Activated B cell treated with CpG ODN at 0.5 μM for 24 hours (primary cell): ENCODE measurements at regions of chr9 and their contacts with region 1.

Region 1: GRCh38 chr9:68844631-68845612 is 139.9 kb downstream of the PIP5K1B start:
- DNase-seq: no peak
- ATAC-seq: peak; percentile 57
- H3K4me3 Mint-ChIP-seq: no peak overlapping the region
- H3K27ac Mint-ChIP-seq: no peak overlapping the region
- H3K4me1 Mint-ChIP-seq: peaks cover 21% of the 10 kb centered on the region
- H3K27me3 Mint-ChIP-seq: no peaks in the 10 kb centered on the region
- CTCF ChIP-seq: peak; percentile 50

Region 2: DNA sequence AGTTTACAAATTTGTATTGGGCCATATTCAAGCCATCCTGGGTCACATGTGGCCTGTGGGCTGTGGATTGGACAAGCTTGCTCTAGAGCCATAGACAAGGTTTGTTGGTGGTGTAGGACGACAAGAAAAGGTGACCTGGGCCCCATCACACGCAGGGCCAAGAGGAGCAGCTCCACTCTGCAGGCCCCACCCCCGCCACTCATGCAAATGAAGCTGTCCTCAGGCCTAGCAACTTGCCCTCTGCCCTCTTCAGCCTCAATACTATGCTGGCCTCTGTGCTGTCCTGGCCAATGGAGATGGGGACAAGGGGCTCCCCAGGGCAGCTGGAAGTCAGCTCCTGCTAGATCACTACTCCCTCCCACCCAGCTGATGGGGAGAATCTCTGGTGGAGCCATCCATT is 249.1 kb before region 1 on chr9:
- CTCF ChIA-PET with region 1: no interaction called
- POLR2A ChIA-PET with region 1: no interaction called
- intact Hi-C with region 1: no loop called
- DNase-seq: no peak
- ATAC-seq: no peak
- H3K4me3 Mint-ChIP-seq: no peak overlapping the region
- H3K27ac Mint-ChIP-seq: no peak overlapping the region
- H3K4me1 Mint-ChIP-seq: peaks cover 60% of the 10 kb centered on the region
- H3K27me3 Mint-ChIP-seq: no peaks in the 10 kb centered on the region
- CTCF ChIP-seq: no peak

Region 3: GRCh38 chr9:68685770-68686169 is 159.2 kb before region 1 on chr9:
- CTCF ChIA-PET with region 1: interaction called, 4 read pairs
- POLR2A ChIA-PET with region 1: no interaction called
- intact Hi-C with region 1: loop called (anchors 1 kb)
- DNase-seq: peak; percentile 27
- ATAC-seq: peak; percentile 97
- H3K4me3 Mint-ChIP-seq: no peak overlapping the region
- H3K27ac Mint-ChIP-seq: no peak overlapping the region
- H3K4me1 Mint-ChIP-seq: peaks cover 9% of the 10 kb centered on the region
- H3K27me3 Mint-ChIP-seq: no peaks in the 10 kb centered on the region
- CTCF ChIP-seq: no peak

Region 4: GRCh38 chr9:68779558-68780384 is 65.2 kb before region 1 on chr9:
- CTCF ChIA-PET with region 1: interaction called, 6 read pairs
- POLR2A ChIA-PET with region 1: interaction called, 3 read pairs
- intact Hi-C with region 1: loop called (anchors 1 kb)
- DNase-seq: peak; percentile 93
- ATAC-seq: peak; percentile 93
- H3K4me3 Mint-ChIP-seq: no peak overlapping the region
- H3K27ac Mint-ChIP-seq: no peak overlapping the region
- H3K4me1 Mint-ChIP-seq: peaks cover 6% of the 10 kb centered on the region
- H3K27me3 Mint-ChIP-seq: no peaks in the 10 kb centered on the region
- CTCF ChIP-seq: no peak

Region 5: GRCh38 chr9:68822596-68823165 is 22.2 kb before region 1 on chr9:
- CTCF ChIA-PET with region 1: no interaction called
- POLR2A ChIA-PET with region 1: no interaction called
- intact Hi-C with region 1: no loop called
- DNase-seq: no peak
- ATAC-seq: no peak
- H3K4me3 Mint-ChIP-seq: no peak overlapping the region
- H3K27ac Mint-ChIP-seq: no peak overlapping the region
- H3K4me1 Mint-ChIP-seq: no peaks in the 10 kb centered on the region
- H3K27me3 Mint-ChIP-seq: no peaks in the 10 kb centered on the region
- CTCF ChIP-seq: no peak

Region 6: GRCh38 chr9:68999393-69000105 is 154.6 kb after region 1 on chr9:
- CTCF ChIA-PET with region 1: interaction called, 12 read pairs
- POLR2A ChIA-PET with region 1: no interaction called
- intact Hi-C with region 1: loop called (anchors 1 kb)
- DNase-seq: peak; percentile 24
- ATAC-seq: peak; percentile 95
- H3K4me3 Mint-ChIP-seq: no peak overlapping the region
- H3K27ac Mint-ChIP-seq: no peak overlapping the region
- H3K4me1 Mint-ChIP-seq: peaks cover 20% of the 10 kb centered on the region
- H3K27me3 Mint-ChIP-seq: no peaks in the 10 kb centered on the region
- CTCF ChIP-seq: peak; percentile 26